Breast epithelium (tissue), 4 donors: ENCODE measurements at regions of chr11 and their contacts with region 1.

Region 1: DNA sequence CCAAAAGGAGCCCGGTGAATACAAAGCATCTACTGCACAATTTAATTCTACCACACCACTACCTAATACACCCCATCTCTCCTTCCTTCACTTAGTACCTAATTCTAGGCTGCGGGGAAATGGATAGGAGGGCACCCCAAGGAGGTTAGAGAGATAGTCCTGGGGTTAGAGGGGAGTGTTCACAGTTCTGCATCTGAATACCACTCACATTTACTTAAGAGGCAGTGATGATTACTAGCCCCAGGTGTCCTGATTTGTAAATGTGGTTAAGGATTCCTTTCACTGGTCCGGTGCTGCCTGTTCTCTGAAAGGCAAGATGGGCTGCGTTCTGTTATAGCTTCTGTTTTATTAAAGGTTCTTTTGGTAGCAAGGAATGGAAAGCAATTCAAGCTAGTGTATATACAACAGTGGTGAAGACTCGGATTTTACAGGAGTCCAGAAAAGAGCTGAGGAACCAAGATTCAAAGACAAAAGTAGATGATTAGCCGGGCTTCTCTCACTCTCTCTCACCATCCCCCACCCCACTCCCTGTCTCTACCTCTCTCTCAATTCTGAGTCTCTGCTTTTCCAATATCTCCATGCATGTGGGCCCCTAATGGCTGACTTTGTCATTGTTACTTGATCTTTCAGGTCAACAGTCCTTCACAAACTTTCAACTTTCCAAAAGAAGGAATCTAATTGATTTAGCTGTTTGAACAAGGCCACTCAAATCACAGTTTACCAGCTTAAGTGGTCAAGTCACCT is 8.7 kb upstream of the KCNA4 start:
- DNase-seq: no peak
- H3K4me3 ChIP-seq: no peak overlapping the region
- H3K27ac ChIP-seq: no peak overlapping the region
- H3K4me1 ChIP-seq: no peaks in the 10 kb centered on the region
- H3K27me3 ChIP-seq: no peaks in the 10 kb centered on the region
- CTCF ChIP-seq: no peak
- POLR2A ChIP-seq: no peak

Region 2: GRCh38 chr11:29452146-29452545 is 573.4 kb before region 1 on chr11:
- intact Hi-C with region 1: loop called (anchors 10 kb)
- DNase-seq: no peak
- H3K4me3 ChIP-seq: no peak overlapping the region
- H3K27ac ChIP-seq: no peak overlapping the region
- H3K4me1 ChIP-seq: no peaks in the 10 kb centered on the region
- H3K27me3 ChIP-seq: no peaks in the 10 kb centered on the region
- CTCF ChIP-seq: no peak
- POLR2A ChIP-seq: no peak

Region 3: GRCh38 chr11:29809121-29809520 is 216.4 kb before region 1 on chr11:
- intact Hi-C with region 1: no loop called
- DNase-seq: no peak
- H3K4me3 ChIP-seq: no peak overlapping the region
- H3K27ac ChIP-seq: no peak overlapping the region
- H3K4me1 ChIP-seq: no peaks in the 10 kb centered on the region
- H3K27me3 ChIP-seq: no peaks in the 10 kb centered on the region
- CTCF ChIP-seq: no peak
- POLR2A ChIP-seq: no peak

Region 4: GRCh38 chr11:30049214-30049613 is 23.6 kb after region 1 on chr11:
- intact Hi-C with region 1: no loop called
- DNase-seq: no peak
- H3K4me3 ChIP-seq: no peak overlapping the region
- H3K27ac ChIP-seq: no peak overlapping the region
- H3K4me1 ChIP-seq: no peaks in the 10 kb centered on the region
- H3K27me3 ChIP-seq: no peaks in the 10 kb centered on the region
- CTCF ChIP-seq: no peak
- POLR2A ChIP-seq: no peak